AG04449 (cell line): ENCODE measurements at regions of chr5 and their contacts with region 1.

Region 1: DNA sequence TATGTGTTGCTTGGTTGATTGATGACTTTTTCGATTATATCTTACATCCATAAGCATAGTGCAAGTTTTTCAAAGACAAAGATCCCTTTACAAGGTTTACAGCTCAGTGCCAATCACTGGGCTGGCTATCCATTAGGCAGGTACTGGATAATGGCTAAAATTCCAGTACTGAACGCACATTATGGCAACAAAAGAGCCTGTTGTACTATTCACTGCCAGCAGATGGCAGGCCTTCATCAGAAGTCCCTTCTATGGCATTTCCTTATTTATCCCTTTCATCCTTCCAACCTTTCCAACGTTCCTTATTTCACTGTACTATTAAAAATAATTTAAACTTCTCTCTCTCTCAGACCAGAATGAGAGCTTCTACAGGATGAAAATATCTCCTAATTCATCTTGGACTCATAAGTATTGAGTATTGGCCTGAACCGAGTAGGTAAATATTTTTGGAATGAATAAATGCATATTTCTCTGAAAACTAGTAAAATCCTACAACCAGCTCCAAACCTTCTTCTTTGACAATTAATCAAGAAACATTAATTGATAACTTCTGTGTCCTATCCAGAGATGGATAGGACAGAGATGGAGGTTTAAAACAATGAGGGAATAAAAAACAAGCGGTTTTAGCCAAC is 6.7 kb upstream of the WNT8A start:
- DNase-seq: peak; percentile 5
- H3K4me3 ChIP-seq: no peak overlapping the region
- CTCF ChIP-seq: peak; percentile 70

Region 2: GRCh38 chr5:137234973-137235943 is 841.9 kb before region 1 on chr5:
- CTCF ChIA-PET with region 1: no interaction called
- POLR2A ChIA-PET with region 1: no interaction called
- DNase-seq: no peak
- H3K4me3 ChIP-seq: no peak overlapping the region
- CTCF ChIP-seq: no peak

Region 3: DNA sequence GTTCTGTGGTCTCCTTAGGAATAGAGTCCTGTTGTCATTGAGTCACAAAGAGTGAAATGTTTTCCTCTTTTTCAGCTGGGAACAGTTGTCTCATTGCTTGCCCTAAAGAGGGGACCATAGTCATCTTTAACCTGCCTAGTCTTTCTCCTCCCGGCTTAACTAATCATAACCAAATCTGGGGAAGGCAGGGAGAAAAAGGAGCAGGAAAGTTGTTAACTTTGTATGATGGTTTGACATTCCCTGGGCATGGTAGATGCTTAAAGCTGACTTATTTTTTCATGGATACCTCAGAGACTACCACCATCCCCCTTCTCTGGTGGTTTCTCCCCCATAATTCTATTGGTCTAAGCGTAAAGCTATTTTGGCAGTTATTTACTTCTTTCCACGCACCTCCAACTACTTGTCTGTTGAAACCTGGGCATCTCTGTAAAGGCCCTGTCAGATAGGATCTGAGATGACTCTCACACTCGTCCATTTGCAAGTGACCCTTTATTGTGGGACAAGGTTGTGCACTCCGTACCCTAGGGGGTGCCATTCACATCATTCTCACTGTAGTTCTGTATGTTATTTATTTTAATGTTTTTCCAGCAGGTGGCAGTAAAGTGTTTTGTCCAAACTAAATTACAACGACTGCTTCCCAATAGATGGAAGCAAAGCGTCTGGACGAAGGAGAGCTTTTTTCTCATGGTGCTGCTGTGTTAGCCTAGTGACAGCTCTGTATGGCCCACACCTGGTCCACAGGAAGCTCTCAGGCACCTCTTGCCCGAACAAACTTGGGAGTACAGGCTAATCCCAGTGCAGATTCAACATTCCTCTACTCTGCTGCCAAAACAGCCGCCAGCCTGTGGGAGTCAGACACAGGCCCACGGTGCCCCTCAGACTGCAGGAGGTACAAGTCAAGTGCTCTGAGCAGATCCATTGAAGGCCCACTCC is 41.3 kb before region 1 on chr5:
- CTCF ChIA-PET with region 1: interaction called, 75 read pairs
- POLR2A ChIA-PET with region 1: no interaction called
- DNase-seq: peak; percentile 59
- H3K4me3 ChIP-seq: no peak overlapping the region
- CTCF ChIP-seq: peak; percentile 61

Region 4: DNA sequence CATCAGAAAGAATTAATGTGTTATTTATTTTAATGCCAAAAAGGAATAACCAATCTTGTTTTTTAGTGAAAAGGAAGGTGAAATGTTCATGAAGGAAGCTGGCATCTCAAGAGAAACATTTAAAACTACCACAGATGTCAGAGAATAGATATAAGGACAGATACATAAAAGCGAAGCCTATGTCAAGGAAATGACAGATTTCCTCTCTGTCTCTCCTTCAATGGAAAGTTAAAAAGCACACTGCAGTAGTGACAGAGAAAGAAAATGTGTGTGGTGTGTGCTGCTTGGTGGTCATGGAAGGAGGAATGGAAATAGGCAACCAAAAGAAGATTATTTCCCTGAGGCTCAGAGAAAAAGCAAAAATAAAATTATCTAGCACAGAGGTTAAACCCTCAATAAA is 15.9 kb after region 1 on chr5:
- CTCF ChIA-PET with region 1: interaction called, 78 read pairs
- POLR2A ChIA-PET with region 1: no interaction called
- DNase-seq: no peak
- H3K4me3 ChIP-seq: no peak overlapping the region
- CTCF ChIP-seq: no peak

Region 5: DNA sequence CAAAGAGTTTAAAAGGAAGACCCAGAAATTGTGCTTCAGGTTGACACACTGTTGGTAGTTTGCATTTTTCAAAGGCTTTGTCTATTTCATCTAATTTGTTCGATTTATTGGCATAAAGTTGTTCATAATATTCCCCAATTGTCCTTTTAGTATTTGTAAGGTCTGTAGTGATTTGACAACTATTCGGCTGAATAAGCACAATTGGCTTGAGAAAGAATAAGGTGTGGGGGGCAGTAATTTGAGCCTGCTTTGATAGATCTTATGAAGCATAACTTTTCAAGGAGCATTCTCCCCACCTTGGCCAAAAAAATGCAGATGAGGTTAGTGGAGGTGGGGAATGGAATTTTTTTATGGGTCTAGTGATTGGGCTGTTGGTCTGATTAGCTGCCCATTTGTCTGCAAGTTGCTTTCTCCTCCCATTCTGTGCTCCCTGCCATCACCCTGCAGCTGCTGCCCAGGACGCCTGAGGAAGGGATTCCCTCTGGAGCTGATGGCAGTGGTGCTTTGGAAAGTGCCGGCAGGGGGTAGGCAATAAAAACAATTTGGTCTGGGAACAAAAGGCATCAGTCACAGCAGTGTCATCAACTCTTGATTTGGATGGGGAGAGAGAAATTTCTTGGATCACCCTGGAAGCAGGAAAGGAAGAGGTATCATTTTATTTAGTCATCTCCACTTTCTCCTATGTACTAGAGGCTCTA is 33.2 kb after region 1 on chr5:
- CTCF ChIA-PET with region 1: interaction called, 19 read pairs
- POLR2A ChIA-PET with region 1: no interaction called
- DNase-seq: no peak
- H3K4me3 ChIP-seq: no peak overlapping the region
- CTCF ChIP-seq: no peak

Region 6: DNA sequence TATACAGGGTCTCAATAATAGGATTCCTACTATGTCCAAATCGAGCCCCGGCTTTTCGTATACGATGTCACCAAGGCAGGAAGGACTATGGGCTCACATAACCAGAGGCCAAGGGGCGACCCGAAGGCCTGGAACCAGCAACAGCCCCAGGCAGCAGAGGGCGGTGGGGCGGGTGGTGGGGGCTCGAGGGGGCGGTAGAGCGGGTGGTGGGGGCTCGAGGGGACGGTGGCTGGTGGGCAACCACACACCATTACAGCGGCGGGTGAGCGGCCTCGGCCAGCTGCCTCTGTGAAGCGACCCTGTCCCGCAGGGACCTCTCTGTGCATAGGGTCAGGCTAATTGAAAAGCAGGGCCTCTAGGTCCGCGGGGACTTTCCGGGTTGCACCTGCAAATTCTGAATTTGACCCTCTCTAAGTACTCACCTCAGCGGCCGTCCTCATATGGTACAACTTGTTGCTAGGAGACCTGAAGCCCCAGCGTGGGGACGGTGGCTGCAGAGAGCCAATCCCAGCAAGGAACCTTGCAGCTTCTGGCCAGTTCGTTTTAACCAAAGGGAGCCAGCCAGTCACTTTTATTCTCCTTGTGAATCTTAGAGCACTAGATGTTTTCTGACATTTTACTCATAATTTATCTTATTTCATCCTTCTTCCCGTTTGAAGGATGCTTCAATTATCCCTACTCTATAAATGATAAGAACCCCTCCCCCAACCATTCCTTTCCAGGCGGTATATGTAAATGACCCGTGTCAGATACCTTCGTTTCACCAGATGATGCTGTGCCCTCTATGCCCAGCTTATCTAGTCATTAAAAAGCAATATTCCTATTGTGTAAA is 62.0 kb after region 1 on chr5 and contains the start of gene NME5:
- CTCF ChIA-PET with region 1: interaction called, 229 read pairs
- POLR2A ChIA-PET with region 1: no interaction called
- DNase-seq: no peak
- H3K4me3 ChIP-seq: peak within 1 kb of the TSS; percentile 49
- CTCF ChIP-seq: no peak